Tibial artery (tissue), 4 donors: ENCODE measurements at regions of chr5 and their contacts with region 1.

Region 1: DNA sequence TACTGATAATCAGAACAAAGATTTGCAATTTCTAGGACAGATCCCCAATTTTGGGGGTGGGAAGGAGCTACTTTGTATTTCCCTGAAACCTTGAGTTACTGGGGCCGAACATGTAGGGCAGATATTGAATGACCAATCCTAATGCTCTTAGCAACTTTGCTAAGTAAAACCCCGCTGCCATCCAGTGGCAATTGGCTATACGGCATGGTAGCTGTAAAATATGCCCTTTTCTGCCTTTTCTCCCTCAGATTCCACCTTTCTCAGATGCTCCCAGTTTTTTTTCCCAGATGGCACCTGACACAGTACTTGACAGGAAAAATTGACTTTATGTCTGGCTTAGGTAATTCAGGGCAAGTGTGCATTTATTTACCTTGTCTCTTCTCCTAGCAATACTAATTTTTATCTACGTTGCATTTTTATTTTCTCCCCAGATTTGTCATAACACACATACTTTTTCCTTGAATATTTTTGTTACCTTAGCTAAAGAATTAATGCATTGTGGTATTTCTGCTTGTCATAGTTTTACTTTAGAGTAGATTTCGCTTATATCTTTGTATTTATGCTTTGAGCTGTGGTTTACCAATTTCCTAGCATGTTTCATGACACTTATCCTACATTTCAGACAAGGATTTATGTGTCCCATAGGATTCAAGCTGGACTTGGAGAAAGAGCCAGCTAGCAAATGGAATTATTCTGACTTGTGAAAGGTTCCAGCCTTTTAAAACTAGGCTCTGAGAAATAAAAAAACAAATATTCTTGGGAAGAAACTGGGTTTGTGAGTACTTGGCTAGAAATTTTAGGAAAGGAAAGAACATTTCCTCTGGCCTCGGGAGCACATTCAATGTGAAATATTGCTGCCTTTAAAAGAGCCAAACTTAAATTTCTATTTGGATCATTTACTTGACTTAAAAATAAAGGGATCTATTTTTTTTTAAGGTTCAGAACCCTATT is 37.4 kb downstream of the PIK3R1 start:
- DNase-seq: peak in 1 of 2 donors; percentile 73
- H3K4me3 ChIP-seq: peak overlapping the region in 1 of 2 donors; percentile 9
- H3K27ac ChIP-seq: peak overlapping the region; percentile 69 to 75
- H3K4me1 ChIP-seq: peaks cover 0 to 100% (median 73%) of the 10 kb centered on the region in 4 donors
- H3K27me3 ChIP-seq: no peaks in the 10 kb centered on the region
- CTCF ChIP-seq: peak; percentile 67 to 82

Region 2: DNA sequence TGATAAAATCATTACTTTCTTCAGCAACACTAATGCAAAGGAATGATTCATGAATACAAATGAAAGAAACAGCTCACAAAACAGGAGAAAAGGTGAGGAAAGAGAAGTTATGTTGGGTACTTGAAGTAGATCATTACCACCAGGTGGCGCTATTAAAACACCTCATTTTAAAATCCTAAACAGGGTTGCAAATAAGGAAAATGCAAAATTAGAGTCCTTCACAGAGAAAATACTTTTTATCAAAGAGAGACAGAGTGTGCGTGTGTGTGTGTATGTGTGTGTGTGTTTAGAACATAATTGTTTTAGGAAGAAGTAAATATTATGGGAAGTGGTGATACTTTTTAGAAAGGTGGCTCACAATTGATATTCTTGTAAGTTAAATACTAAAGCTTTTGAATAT is 1006.8 kb before region 1 on chr5:
- intact Hi-C with region 1: loop called (anchors 5 kb)
- DNase-seq: no peak
- H3K4me3 ChIP-seq: no peak overlapping the region
- H3K27ac ChIP-seq: peak overlapping the region; percentile 73 to 75
- H3K4me1 ChIP-seq: peaks cover 0 to 42% (median 28%) of the 10 kb centered on the region in 4 donors
- H3K27me3 ChIP-seq: no peaks in the 10 kb centered on the region
- CTCF ChIP-seq: peak; percentile 73 to 86

Region 3: GRCh38 chr5:68007451-68007850 is 245.5 kb before region 1 on chr5:
- intact Hi-C with region 1: no loop called
- DNase-seq: peak; percentile 57 to 74
- H3K4me3 ChIP-seq: no peak overlapping the region
- H3K27ac ChIP-seq: no peak overlapping the region
- H3K4me1 ChIP-seq: no peaks in the 10 kb centered on the region
- H3K27me3 ChIP-seq: no peaks in the 10 kb centered on the region
- CTCF ChIP-seq: no peak

Region 4: DNA sequence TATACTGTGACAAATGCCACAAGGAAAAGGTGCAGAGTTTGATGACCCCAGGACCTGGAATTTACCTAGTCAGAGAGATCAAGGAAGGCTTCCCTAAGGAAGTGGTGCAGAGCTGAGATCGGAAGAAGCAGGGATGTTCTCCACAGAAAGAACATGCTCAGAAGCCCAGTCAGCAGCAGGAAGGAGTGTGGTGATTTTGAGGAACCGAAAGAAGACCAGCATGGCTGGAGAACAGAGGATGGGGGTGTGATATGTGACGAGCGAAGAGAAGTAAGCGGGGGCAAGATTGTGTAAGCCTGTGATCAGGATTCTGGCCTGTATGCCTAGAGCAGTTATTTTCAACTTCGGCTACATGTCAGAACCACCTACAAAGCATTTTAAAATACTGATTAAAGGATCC is 56.1 kb before region 1 on chr5:
- intact Hi-C with region 1: no loop called
- DNase-seq: peak in 1 of 2 donors; percentile 53
- H3K4me3 ChIP-seq: no peak overlapping the region
- H3K27ac ChIP-seq: no peak overlapping the region
- H3K4me1 ChIP-seq: peaks cover 0 to 25% (median 5%) of the 10 kb centered on the region in 4 donors
- H3K27me3 ChIP-seq: no peaks in the 10 kb centered on the region
- CTCF ChIP-seq: no peak